ENCODE measurements at regions of chr7 and their contacts with region 1.

Region 1: DNA sequence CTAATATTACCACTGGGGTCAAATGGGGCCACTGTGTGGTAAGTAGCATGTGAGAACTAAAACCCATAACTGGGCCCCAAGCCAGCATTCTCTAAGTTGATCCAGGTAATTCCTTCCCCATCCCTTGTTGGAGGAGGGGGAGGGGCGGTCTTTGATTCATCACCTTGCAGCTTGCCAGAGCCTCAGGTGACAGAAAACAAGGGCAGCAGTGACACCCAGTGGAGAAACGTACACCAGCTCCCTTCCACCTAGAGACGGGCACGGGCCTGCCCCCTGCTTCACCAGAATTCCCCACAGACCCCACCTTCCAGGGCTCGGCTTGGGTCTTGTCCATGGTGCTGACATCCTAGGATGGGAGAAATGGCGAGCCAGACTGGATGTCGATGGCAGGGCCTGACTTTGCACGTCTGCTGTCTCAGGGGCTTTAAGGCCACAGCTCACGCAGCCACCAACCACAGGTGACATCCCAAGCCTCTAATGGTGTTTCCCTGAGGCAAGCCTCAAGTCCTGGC is 102.0 kb downstream of the STRA8 start:
- DNase-seq: no peak
- ATAC-seq: peak; percentile 69

Region 2: GRCh38 chr7:135281363-135281949 is 54.2 kb before region 1 on chr7:
- intact Hi-C with region 1: loop called (anchors 5 kb)
- DNase-seq: peak; percentile 68
- ATAC-seq: peak; percentile 98

Region 3: DNA sequence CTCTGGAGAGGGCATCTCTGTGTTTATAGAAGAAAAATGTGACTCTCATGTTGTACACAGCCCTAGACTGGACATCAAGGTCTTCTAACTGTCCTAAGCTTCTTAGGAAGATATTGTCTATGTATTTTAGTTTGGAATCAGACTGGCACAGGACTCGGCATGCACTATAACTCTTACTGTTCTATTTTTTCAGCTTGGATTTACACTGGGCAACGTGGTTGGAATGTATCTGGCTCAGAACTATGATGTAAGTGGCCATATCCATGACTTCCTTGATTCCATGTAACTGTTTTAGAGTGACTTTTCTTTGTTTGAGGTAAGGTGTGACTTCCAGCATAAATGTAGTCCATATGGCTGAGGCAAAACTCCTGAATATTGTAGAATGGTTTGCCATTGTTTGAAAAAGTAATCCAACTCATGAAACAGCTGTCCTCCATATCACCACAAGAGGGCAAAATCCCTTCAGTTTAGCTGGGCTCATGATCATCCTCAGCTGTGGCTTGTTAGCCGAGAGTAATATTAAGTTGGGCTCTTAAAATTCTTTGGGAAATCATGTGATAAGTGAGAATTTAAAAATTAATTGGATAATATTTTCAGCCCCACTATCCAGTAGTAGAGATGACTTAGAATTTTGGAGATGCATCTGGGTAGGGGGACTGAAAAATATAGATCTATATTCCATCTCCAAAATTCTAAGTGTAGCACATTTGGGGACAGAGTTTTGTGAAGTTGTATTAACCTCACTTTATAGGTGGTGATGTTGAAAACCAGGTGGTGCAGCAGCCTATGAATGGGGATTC is 337.1 kb after region 1 on chr7:
- intact Hi-C with region 1: no loop called
- DNase-seq: no peak
- ATAC-seq: peak; percentile 81